Transverse colon (tissue), 4 donors: ENCODE measurements at regions of chr9 and their contacts with region 1.

Region 1: DNA sequence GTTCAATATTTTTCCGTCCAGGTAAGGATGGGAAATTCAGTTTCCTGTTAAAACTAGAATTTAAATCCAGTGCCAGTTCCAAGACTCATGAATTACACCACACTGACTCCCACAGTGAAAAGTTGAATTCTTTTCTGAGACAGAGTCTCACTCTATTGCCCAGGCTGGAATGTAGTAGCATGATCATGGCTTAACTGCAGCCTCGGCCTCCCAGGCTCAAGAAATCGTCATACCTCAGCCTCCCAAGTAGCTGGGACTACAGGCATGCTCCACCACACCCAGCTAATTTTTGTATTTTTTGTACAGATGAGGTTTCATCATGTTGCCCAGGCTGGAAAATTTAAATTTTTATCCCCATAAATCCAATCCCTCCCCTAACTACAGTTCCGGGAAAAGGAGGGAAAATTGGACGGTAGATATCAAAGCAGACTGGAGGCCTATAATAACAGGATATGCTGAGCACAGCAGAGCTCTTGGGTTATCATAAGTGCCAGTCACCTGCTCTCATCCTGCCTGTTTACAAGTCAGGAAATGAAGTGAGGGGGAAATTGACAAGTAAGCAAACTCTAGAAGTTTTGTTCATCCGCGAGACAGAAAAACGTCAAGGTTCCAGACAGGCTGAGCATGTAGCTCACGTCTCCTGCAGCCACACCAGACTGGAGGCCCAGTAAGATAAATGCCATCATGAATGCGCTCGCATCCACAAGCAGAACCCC is 105.7 kb downstream of the UGCG start:
- DNase-seq: no peak
- H3K4me3 ChIP-seq: no peak overlapping the region
- H3K27ac ChIP-seq: no peak overlapping the region
- H3K4me1 ChIP-seq: no peaks in the 10 kb centered on the region
- H3K27me3 ChIP-seq: no peaks in the 10 kb centered on the region
- CTCF ChIP-seq: no peak
- EP300 ChIP-seq: no peak
- POLR2A ChIP-seq: no peak

Region 2: GRCh38 chr9:111945216-111945615 is 57.1 kb before region 1 on chr9:
- in situ Hi-C with region 1: loop called in 1 of 4 experiments (anchors 10 kb)
- intact Hi-C with region 1: no loop called
- DNase-seq: no peak
- H3K4me3 ChIP-seq: no peak overlapping the region
- H3K27ac ChIP-seq: no peak overlapping the region
- H3K4me1 ChIP-seq: peaks cover 0 to 3% (median 0%) of the 10 kb centered on the region in 4 donors
- H3K27me3 ChIP-seq: no peaks in the 10 kb centered on the region
- CTCF ChIP-seq: no peak
- EP300 ChIP-seq: no peak
- POLR2A ChIP-seq: no peak

Region 3: GRCh38 chr9:112041536-112042243 is 39.4 kb after region 1 on chr9:
- in situ Hi-C with region 1: no loop called
- intact Hi-C with region 1: no loop called
- DNase-seq: no peak
- H3K4me3 ChIP-seq: no peak overlapping the region
- H3K27ac ChIP-seq: peak overlapping the region in 1 of 4 donors; percentile 36
- H3K4me1 ChIP-seq: peaks cover 0 to 5% (median 1%) of the 10 kb centered on the region in 4 donors
- H3K27me3 ChIP-seq: no peaks in the 10 kb centered on the region
- CTCF ChIP-seq: no peak
- EP300 ChIP-seq: no peak
- POLR2A ChIP-seq: no peak

Region 4: GRCh38 chr9:112112941-112113681 is 110.8 kb after region 1 on chr9:
- in situ Hi-C with region 1: no loop called
- intact Hi-C with region 1: no loop called
- DNase-seq: peak; percentile 49
- H3K4me3 ChIP-seq: no peak overlapping the region
- H3K27ac ChIP-seq: no peak overlapping the region
- H3K4me1 ChIP-seq: peaks cover 0 to 7% (median 3%) of the 10 kb centered on the region in 4 donors
- H3K27me3 ChIP-seq: no peaks in the 10 kb centered on the region
- CTCF ChIP-seq: peak; percentile 37 to 71 (median 51)
- EP300 ChIP-seq: no peak
- POLR2A ChIP-seq: no peak

Region 5: DNA sequence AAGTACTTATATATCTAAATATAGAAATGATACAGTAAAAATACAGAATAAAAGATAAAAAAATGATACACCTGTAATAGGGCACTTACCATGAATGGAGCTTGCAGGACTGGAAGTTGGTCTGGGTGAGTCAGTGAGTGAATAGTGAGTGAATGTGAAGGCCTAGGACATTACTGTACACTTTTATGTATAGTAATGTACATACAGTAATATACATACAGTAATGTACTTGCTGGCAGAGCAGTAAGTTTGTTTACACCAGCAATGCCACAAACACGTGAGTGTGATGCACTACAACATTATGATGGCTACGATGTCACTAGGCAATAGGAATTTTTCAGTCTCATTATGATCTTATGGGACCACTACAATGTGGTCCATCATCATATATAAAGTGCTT is 138.6 kb after region 1 on chr9:
- in situ Hi-C with region 1: no loop called
- intact Hi-C with region 1: no loop called
- DNase-seq: no peak
- H3K4me3 ChIP-seq: no peak overlapping the region
- H3K27ac ChIP-seq: no peak overlapping the region
- H3K4me1 ChIP-seq: peaks cover 0 to 2% (median under 1%) of the 10 kb centered on the region in 4 donors
- H3K27me3 ChIP-seq: no peaks in the 10 kb centered on the region
- CTCF ChIP-seq: no peak
- EP300 ChIP-seq: no peak
- POLR2A ChIP-seq: no peak

Region 6: GRCh38 chr9:112680731-112681402 is 678.6 kb after region 1 on chr9:
- in situ Hi-C with region 1: no loop called
- intact Hi-C with region 1: no loop called
- DNase-seq: no peak
- H3K4me3 ChIP-seq: no peak overlapping the region
- H3K27ac ChIP-seq: no peak overlapping the region
- H3K4me1 ChIP-seq: no peaks in the 10 kb centered on the region
- H3K27me3 ChIP-seq: no peaks in the 10 kb centered on the region
- CTCF ChIP-seq: no peak
- EP300 ChIP-seq: no peak
- POLR2A ChIP-seq: no peak